Naive thymus-derived CD8-positive, alpha-beta T cell (primary cell): ENCODE measurements at regions of chr13 and their contacts with region 1.

Region 1: GRCh38 chr13:45340422-45340925 is 509 bp downstream of the TPT1 start:
- DNase-seq: peak; percentile 68 to 89 (median 78)
- ATAC-seq: peak; percentile 50 to 55
- H3K4me3 Mint-ChIP-seq: peak overlapping the region; percentile 95 to 100 (median 97)
- H3K27ac Mint-ChIP-seq: peak overlapping the region; percentile 93 to 100 (median 100)
- H3K4me1 Mint-ChIP-seq: peaks cover 32 to 73% (median 62%) of the 10 kb centered on the region in 4 donors
- H3K27me3 Mint-ChIP-seq: peaks cover 0 to 4% (median 0%) of the 10 kb centered on the region in 5 donors

Region 2: GRCh38 chr13:45024847-45025246 is 315.6 kb before region 1 on chr13:
- POLR2A ChIA-PET with region 1: no interaction called
- DNase-seq: no peak
- ATAC-seq: no peak
- H3K4me3 Mint-ChIP-seq: no peak overlapping the region
- H3K27ac Mint-ChIP-seq: no peak overlapping the region
- H3K4me1 Mint-ChIP-seq: no peaks in the 10 kb centered on the region
- H3K27me3 Mint-ChIP-seq: no peaks in the 10 kb centered on the region

Region 3: DNA sequence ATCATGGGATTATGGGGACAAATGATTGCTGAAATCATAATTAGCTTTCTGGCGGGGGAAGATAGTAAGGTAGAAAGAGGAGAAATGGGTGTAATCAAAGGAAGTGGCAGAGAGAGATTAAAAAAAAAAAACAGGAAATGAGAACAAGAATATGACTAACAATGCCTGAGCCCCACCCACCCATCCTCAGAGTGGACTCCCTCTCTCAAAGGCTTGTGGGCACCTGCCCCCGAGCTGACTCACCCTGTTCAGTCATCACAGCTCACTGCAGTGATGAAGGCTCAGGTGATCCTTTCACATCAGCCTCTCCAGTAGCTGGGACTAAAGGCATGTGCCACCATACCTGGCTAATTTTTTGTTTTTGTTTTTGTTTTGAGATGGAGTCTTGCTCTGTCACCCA is 26.9 kb after region 1 on chr13:
- POLR2A ChIA-PET with region 1: interaction called, 78 read pairs
- DNase-seq: peak; percentile 63 to 96 (median 86)
- ATAC-seq: peak; percentile 99
- H3K4me3 Mint-ChIP-seq: peak overlapping the region; percentile 32 to 81 (median 71)
- H3K27ac Mint-ChIP-seq: peak overlapping the region; percentile 60 to 95 (median 93)
- H3K4me1 Mint-ChIP-seq: peaks cover 28 to 75% (median 61%) of the 10 kb centered on the region in 4 donors
- H3K27me3 Mint-ChIP-seq: no peaks in the 10 kb centered on the region

Region 4: GRCh38 chr13:45393941-45394570 is 53.6 kb after region 1 on chr13:
- POLR2A ChIA-PET with region 1: interaction called, 17 read pairs
- DNase-seq: peak in 6 of 10 donors; percentile 10 to 31 (median 22)
- ATAC-seq: no peak
- H3K4me3 Mint-ChIP-seq: peak overlapping the region in 1 of 10 donors; percentile 30
- H3K27ac Mint-ChIP-seq: peak overlapping the region in 8 of 10 donors; percentile 2 to 95 (median 46)
- H3K4me1 Mint-ChIP-seq: peaks cover 19 to 50% (median 47%) of the 10 kb centered on the region in 4 donors
- H3K27me3 Mint-ChIP-seq: no peaks in the 10 kb centered on the region

Region 5: GRCh38 chr13:45417790-45418534 is 77.5 kb after region 1 on chr13 and contains the start of gene SLC25A30:
- POLR2A ChIA-PET with region 1: interaction called, 31 read pairs
- DNase-seq: peak; percentile 87 to 95 (median 90)
- ATAC-seq: peak; percentile 89
- H3K4me3 Mint-ChIP-seq: peak within 1 kb of the TSS; percentile 91 to 99 (median 98)
- H3K27ac Mint-ChIP-seq: peak within 1 kb of the TSS; percentile 90 to 98 (median 96)
- H3K4me1 Mint-ChIP-seq: peaks cover 15 to 35% (median 25%) of the 10 kb centered on the region in 4 donors
- H3K27me3 Mint-ChIP-seq: no peaks in the 10 kb centered on the region
- polyA plus RNA-seq, gene SLC25A30: 1.2 to 1.9 (median 1.8) TPM

Region 6: GRCh38 chr13:45464687-45465453 is 124.4 kb after region 1 on chr13 and contains the start of gene COG3:
- POLR2A ChIA-PET with region 1: interaction called, 12 read pairs
- DNase-seq: peak; percentile 88 to 98 (median 94)
- ATAC-seq: peak; percentile 89 to 94
- H3K4me3 Mint-ChIP-seq: peak within 1 kb of the TSS; percentile 89 to 97 (median 92)
- H3K27ac Mint-ChIP-seq: peak within 1 kb of the TSS; percentile 87 to 98 (median 96)
- H3K4me1 Mint-ChIP-seq: peaks cover 20 to 58% (median 53%) of the 10 kb centered on the region in 4 donors
- H3K27me3 Mint-ChIP-seq: no peaks in the 10 kb centered on the region
- polyA plus RNA-seq, gene COG3: 22.2 to 29.9 (median 27.4) TPM

Region 7: GRCh38 chr13:45768656-45769479 is 428.4 kb after region 1 on chr13:
- POLR2A ChIA-PET with region 1: no interaction called
- DNase-seq: no peak
- ATAC-seq: no peak
- H3K4me3 Mint-ChIP-seq: no peak overlapping the region
- H3K27ac Mint-ChIP-seq: no peak overlapping the region
- H3K4me1 Mint-ChIP-seq: peaks cover 4 to 7% (median 5%) of the 10 kb centered on the region in 4 donors
- H3K27me3 Mint-ChIP-seq: peaks cover 0 to 3% (median 0%) of the 10 kb centered on the region in 5 donors